ENCODE measurements at regions of chr2 and their contacts with region 1.

Region 1: DNA sequence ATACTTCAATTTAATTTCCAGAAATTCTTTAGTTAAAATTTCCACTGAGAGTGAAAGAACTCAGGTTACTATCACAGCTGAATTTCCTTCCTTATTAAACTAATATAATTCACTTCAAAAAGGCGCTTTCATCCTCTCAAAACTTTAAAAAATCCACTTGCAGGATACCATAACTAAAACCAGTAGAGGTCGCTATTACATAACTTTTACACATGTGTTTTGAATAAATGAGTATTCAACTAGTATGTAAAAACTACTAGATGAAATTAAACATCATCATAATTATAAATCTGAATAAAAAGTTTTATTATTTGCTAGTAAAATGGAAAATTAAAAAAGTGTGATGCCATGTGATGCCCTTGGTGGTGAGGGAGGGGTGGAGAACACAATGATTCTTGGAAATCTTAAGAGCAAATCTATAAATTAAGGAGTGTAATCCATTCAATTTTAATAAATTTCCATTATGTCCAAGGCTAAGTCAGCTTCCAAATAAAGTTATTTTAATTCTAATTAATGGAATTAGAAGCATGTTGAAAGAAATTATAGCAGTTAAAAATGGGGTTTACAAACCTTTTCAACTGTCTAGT is 61.4 kb downstream of the SOS1 start:
- DNase-seq: no peak
- H3K4me3 ChIP-seq: no peak overlapping the region
- H3K27ac ChIP-seq: no peak overlapping the region
- H3K4me1 ChIP-seq: peaks cover 0 to 12% (median 9%) of the 10 kb centered on the region in 4 donors
- H3K27me3 ChIP-seq: no peaks in the 10 kb centered on the region
- CTCF ChIP-seq: peak; percentile 68 to 73 (median 70)
- EP300 ChIP-seq: no peak
- POLR2A ChIP-seq: no peak

Region 2: DNA sequence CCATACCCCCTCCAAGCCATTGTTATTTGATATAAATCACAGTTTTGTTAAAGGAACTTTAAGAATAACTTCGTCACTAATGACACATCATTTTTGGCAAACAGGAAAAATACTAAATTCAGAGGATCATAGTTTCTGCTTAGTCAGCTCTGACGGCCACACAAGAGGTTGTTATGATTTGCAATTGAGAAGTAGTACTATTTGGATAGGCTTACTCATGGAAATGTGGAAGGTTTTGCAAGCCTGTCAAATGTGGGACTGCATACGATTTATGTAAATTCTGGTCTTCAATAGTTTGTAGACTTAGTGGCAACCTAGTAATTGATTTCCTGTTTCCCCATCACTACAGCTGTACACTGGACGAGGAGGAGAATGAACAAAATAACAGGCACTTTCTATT is 61.7 kb before region 1 on chr2:
- intact Hi-C with region 1: no loop called
- DNase-seq: no peak
- H3K4me3 ChIP-seq: no peak overlapping the region
- H3K27ac ChIP-seq: no peak overlapping the region
- H3K4me1 ChIP-seq: no peaks in the 10 kb centered on the region
- H3K27me3 ChIP-seq: no peaks in the 10 kb centered on the region
- CTCF ChIP-seq: no peak
- EP300 ChIP-seq: no peak
- POLR2A ChIP-seq: no peak

Region 3: DNA sequence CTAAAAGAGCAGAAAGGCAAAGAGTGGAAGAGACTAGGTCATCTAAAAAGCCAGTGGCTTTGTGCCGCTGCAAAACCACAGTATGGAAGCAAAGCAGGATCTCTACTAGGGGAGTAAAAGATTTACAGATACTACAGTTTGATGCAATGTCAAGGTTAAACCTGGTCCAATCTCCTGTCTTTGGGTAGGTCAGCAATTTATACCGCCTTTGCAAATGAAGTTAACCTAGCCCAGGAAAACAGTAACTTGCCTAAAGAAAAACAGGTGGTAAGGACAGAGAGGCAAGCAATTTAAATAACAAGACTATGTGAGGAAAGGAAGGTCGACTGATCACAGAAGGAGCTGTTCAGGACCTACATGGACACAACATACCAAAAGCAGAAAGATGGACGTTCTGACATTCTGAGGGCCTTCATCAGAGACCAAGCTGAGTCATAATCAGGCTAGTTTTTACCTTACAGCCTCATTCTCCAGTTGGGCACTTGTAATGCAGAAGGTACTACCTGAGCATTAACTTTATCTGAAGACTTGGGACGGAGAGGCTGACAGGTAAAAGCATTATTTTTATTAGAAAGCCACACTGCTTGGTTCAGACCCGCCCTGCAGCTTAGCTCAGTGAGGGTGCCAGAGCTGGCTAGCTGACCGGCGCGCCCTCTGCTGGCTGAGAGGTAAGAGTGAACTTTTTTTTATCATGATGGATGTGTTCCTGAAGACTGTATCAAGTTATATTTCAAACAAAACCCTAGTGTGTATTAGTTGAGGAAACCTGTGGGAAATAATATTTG is 168.4 kb after region 1 on chr2:
- intact Hi-C with region 1: loop called (anchors 2 kb)
- DNase-seq: no peak
- H3K4me3 ChIP-seq: peak overlapping the region; percentile 24 to 39 (median 30)
- H3K27ac ChIP-seq: no peak overlapping the region
- H3K4me1 ChIP-seq: peaks cover 15 to 27% (median 26%) of the 10 kb centered on the region in 4 donors
- H3K27me3 ChIP-seq: no peaks in the 10 kb centered on the region
- CTCF ChIP-seq: peak; percentile 88 to 92 (median 88)
- EP300 ChIP-seq: no peak
- POLR2A ChIP-seq: no peak

Measured in esophagus muscularis mucosa (tissue), 4 donors.